Activated CD4-positive, alpha-beta memory T cell treated with anti-CD3 and anti-CD28 coated beads for 36 hours (primary cell): ENCODE measurements at regions of chr12 and their contacts with region 1.

Region 1: DNA sequence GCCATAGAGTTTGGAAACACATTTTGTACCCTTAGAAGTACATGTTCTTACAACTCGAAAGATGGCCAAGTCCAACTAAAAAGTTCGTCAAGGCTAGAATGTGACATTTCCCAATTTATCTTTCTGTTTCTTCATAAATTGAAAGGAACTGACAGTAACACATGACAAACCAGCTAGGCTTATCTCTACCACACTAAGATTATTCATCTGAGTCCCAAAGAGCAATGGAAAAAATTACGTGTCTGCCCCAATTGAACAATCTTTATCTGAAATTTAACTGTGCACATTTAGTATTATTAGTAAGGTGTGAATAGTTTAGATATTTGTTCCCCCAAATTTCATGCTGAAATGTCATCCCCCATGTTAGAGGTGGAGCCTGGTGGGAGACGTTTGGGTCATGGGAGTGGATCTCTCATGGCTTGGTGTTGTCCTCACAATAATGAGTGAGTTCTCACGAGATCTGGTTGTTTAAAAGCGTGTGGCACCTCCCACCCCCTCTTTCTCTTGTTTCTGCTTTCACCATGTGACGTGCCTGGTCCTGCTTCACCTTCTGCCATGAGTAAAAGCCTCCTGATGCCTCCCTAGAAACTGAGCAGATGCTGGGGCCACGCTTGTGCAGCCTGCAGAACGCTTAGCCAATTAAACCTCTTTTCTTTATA is 13.3 kb downstream of the CPM start:
- DNase-seq: peak; percentile 60
- H3K4me3 Mint-ChIP-seq: no peak overlapping the region
- H3K27ac Mint-ChIP-seq: no peak overlapping the region
- H3K4me1 Mint-ChIP-seq: peaks cover 9% of the 10 kb centered on the region
- H3K27me3 Mint-ChIP-seq: no peaks in the 10 kb centered on the region

Region 2: DNA sequence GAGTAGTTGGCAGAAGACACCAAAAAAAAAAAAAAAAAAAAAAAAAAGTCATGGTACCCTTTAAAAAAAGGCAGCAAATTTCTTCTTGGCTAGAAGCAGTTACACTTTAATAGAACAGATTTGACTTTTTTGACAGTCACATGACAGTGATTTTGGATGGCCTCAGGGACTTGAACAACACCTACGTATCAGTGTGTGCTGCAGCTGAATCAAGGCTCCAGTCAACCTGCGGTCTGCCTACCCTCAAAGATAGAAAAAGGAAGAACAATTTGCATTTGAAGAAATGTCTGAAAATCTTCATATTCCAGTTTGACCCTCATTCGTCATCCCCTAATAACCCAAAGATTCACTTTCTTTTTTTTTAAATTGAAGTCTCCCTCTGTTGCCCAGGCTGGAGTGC is 57.8 kb before region 1 on chr12:
- CTCF ChIA-PET with region 1: no interaction called
- POLR2A ChIA-PET with region 1: no interaction called
- intact Hi-C with region 1: no loop called
- DNase-seq: no peak
- H3K4me3 Mint-ChIP-seq: no peak overlapping the region
- H3K27ac Mint-ChIP-seq: no peak overlapping the region
- H3K4me1 Mint-ChIP-seq: no peaks in the 10 kb centered on the region
- H3K27me3 Mint-ChIP-seq: no peaks in the 10 kb centered on the region

Region 3: GRCh38 chr12:68889647-68890121 is 30.0 kb before region 1 on chr12:
- CTCF ChIA-PET with region 1: no interaction called
- POLR2A ChIA-PET with region 1: no interaction called
- intact Hi-C with region 1: loop called (anchors 2 kb)
- DNase-seq: no peak
- H3K4me3 Mint-ChIP-seq: no peak overlapping the region
- H3K27ac Mint-ChIP-seq: no peak overlapping the region
- H3K4me1 Mint-ChIP-seq: peaks cover 29% of the 10 kb centered on the region
- H3K27me3 Mint-ChIP-seq: peaks cover 1% of the 10 kb centered on the region

Region 4: DNA sequence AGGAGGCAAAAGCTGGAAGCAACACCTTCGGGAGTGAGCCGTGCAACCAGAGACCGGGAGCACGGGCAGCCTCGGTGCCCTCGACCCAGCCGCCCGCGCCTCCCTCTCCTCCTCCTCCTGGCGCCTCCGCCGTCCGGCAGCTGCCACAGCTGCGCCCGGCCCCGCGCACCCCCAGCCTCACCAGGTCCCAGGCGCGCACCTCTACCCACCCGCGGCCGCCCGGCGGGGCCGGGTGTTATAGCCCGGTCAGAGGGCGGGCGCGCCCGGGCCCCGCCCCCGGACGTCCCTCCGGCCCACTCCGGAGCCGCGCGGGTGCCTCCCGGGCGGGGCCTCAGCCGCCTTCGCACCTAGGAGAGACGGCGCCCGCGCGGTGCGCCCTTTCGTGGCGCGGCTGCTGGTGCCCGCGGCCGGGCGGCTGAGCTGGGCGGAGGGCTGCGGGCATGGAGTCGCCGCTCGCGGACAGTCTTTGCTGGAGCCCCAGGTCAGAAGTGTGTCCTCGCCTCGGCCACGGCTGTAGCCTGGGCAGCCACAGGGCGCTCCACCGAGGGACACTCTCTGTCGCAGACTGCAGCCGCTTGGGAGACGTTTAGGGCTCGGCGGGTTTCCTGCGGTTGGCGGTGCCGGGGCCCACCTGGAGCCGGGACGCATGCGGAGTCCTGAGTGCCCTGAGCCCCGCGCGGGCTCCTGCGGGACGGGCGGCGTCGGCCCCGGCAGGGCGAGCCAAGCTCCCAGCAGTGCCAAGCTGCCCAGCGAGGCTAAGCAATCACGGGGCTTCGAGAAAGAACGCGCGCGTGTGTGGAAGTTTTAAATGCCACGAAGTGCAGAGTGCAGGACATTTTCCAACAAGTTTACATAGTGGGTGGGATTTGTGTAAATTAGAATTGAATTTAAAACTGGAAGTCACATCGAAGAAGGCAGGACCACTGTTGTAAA is 13.5 kb after region 1 on chr12 and contains the start of gene CPM:
- CTCF ChIA-PET with region 1: interaction called, 3 read pairs
- POLR2A ChIA-PET with region 1: interaction called, 3 read pairs
- intact Hi-C with region 1: loop called (anchors 1 kb)
- DNase-seq: peak; percentile 81
- H3K4me3 Mint-ChIP-seq: peak within 1 kb of the TSS; percentile 82
- H3K27ac Mint-ChIP-seq: peak within 1 kb of the TSS; percentile 43
- H3K4me1 Mint-ChIP-seq: peaks cover 17% of the 10 kb centered on the region
- H3K27me3 Mint-ChIP-seq: peaks cover 17% of the 10 kb centered on the region
- total RNA-seq, gene CPM: 14.7 to 19.8 TPM